PC-3 (cell line): ENCODE measurements at regions of chr4 and their contacts with region 1.

Region 1: GRCh38 chr4:123986268-123986798 is 589.7 kb downstream of the SPRY1 start:
- DNase-seq: peak; percentile 72
- ATAC-seq: peak; percentile 79
- H3K4me3 ChIP-seq: peak overlapping the region; percentile 32; the same call in 1 of the 2 replicates
- H3K27ac ChIP-seq: peak overlapping the region; percentile 27
- H3K4me1 ChIP-seq: peaks cover 21% of the 10 kb centered on the region
- H3K27me3 ChIP-seq: no peaks in the 10 kb centered on the region
- CTCF ChIP-seq: no peak

Region 2: GRCh38 chr4:123671633-123672404 is 314.5 kb before region 1 on chr4:
- CTCF ChIA-PET with region 1: no interaction called
- POLR2A ChIA-PET with region 1: no interaction called
- intact Hi-C with region 1: loop called (anchors 10 kb)
- DNase-seq: no peak
- ATAC-seq: no peak
- H3K4me3 ChIP-seq: no peak overlapping the region
- H3K27ac ChIP-seq: no peak overlapping the region
- H3K4me1 ChIP-seq: peaks cover 32% of the 10 kb centered on the region
- H3K27me3 ChIP-seq: no peaks in the 10 kb centered on the region
- CTCF ChIP-seq: no peak

Region 3: DNA sequence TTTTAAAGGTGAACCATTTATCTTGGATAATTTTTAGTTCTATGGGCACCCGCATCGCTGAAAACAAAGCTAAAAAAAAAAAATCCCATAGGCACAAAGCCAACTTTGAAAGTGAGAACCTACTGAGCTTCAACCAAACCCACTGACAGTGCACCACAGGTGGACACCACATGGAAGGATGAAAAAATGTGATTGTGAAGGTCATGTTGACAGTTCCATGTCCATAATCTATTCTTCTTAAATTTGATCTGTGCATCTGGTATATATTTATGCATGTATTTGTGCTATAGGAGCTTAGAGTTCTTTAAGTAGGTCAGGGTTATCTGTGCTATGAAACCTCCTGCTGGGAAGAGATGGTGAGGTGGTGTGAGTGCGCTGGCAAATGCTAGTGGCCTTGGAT is 215.4 kb before region 1 on chr4:
- CTCF ChIA-PET with region 1: no interaction called
- POLR2A ChIA-PET with region 1: no interaction called
- intact Hi-C with region 1: loop called (anchors 5 kb)
- DNase-seq: no peak
- ATAC-seq: no peak
- H3K4me3 ChIP-seq: no peak overlapping the region
- H3K27ac ChIP-seq: no peak overlapping the region
- H3K4me1 ChIP-seq: no peaks in the 10 kb centered on the region
- H3K27me3 ChIP-seq: no peaks in the 10 kb centered on the region
- CTCF ChIP-seq: no peak

Region 4: DNA sequence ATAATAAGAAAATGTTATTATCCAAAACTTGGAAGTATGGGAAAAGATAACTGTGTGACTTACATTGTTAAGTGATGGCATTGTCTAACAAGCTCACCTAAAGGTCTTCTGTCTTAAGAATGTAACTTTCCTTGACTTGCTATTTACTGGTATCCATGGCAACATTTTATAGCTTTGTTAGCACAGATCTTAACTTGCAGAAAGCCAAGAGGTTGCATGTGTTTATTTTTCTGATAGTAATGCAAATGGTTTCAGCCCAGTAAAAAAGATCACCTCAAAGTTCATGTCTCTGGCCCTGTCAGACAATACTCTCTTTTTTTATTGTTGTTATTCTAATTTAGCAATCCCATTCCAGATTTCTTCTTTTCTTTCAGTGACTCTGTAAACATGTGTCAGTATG is 164.5 kb before region 1 on chr4:
- CTCF ChIA-PET with region 1: no interaction called
- POLR2A ChIA-PET with region 1: no interaction called
- intact Hi-C with region 1: no loop called
- DNase-seq: peak; percentile 2
- ATAC-seq: no peak
- H3K4me3 ChIP-seq: no peak overlapping the region
- H3K27ac ChIP-seq: no peak overlapping the region
- H3K4me1 ChIP-seq: peaks cover 14% of the 10 kb centered on the region
- H3K27me3 ChIP-seq: no peaks in the 10 kb centered on the region
- CTCF ChIP-seq: no peak

Region 5: DNA sequence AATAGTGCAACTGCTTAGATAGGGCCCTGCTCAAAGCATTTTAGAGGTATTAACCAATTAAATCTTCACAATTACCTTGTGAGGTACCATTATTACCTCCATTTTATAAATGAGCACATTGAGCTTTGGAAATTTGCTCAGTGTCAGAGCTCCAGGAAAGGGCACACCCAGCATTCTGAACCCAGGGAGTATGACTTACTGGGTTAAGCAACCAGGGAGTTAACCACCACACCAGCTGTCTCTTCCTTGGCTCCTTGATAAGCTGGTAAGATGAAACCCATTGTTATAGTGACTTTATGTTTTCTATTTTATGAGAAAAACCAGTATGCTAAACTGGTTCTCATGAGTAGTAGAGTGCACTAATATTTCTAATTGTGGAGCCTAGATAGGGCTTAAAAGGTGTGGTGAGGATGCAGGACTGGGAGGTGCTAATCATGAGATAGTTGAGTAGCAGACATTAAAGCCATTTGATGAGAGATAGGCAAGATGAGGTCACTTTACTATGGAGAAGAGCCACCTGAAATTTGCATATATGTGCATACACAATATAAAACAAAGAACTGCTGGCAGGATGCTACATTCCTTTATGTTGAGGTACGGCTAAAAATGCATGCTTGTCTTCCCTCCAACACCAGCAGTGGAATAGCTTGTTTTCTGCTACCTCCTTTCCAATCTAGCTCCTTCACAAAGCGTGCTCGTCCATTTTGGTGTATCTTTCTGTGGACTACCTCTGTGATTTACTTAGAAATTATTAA is 33.6 kb before region 1 on chr4:
- CTCF ChIA-PET with region 1: no interaction called
- POLR2A ChIA-PET with region 1: no interaction called
- intact Hi-C with region 1: loop called (anchors 1 kb)
- DNase-seq: peak; percentile 28
- ATAC-seq: no peak
- H3K4me3 ChIP-seq: no peak overlapping the region
- H3K27ac ChIP-seq: no peak overlapping the region
- H3K4me1 ChIP-seq: peaks cover 15% of the 10 kb centered on the region; the same call in 1 of the 2 replicates
- H3K27me3 ChIP-seq: no peaks in the 10 kb centered on the region
- CTCF ChIP-seq: no peak

Region 6: DNA sequence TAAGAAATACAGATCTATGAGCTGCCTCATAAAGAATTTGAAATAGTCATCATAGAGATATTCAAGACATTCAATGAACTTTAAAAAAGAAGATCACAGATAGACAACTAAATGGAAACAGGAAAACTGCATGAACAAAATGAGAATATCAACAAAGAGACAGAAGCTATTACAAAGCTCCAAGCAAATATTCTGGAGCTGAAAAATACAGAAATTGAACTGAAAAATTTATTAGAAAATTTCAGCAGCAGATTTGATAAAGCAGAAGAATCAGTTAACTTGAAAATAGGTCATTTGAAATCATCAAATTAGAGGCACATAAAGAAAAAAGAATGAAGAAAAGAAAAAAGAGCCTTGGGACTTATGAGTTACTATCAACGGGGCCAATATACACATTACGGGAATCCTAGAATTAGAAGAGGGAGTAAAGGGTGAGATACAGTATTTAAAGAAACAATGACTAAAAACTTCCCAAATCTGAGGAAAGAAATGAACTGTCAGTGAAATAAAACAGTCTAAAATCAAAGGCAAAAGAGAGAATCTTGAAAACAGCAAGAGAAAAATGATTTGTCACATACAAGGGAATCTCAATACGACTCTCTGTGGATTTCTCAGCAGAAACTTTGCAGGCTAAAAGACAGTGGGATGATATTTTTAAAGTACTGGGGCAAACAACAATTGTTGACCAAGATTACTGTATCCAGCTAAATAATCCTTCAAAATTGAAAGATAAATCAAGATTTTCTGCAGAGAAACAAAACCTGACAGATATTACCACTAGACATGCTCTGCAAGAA is 84.6 kb after region 1 on chr4:
- CTCF ChIA-PET with region 1: no interaction called
- POLR2A ChIA-PET with region 1: no interaction called
- intact Hi-C with region 1: no loop called
- DNase-seq: peak; percentile 9
- ATAC-seq: no peak
- H3K4me3 ChIP-seq: no peak overlapping the region
- H3K27ac ChIP-seq: no peak overlapping the region
- H3K4me1 ChIP-seq: no peaks in the 10 kb centered on the region
- H3K27me3 ChIP-seq: no peaks in the 10 kb centered on the region
- CTCF ChIP-seq: no peak